AG04449 (cell line): ENCODE measurements at regions of chrX and their contacts with region 1.

Region 1: DNA sequence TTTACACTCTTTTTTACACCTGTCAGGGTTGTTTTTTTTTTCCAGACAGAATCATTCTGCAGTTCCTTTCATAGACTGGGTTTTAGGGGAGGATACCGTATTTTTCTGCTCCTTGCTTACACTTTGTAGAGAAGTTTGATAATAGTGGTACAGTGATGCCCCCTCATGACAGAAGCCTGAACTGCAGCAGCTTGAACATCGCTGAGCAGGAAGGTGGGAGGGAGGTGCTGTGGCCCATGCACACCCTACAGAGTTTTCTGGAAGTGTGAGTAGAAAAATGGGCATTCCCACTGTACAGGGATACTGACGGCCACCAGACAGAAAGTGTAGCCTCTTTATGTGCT is 54.5 kb downstream of the RAB40A start:
- DNase-seq: no peak
- H3K4me3 ChIP-seq: no peak overlapping the region
- CTCF ChIP-seq: peak; percentile 75

Region 2: GRCh38 chrX:102515975-102516941 is 948.5 kb before region 1 on chrX and contains the start of gene TMSB15A:
- CTCF ChIA-PET with region 1: no interaction called
- POLR2A ChIA-PET with region 1: no interaction called
- DNase-seq: no peak
- H3K4me3 ChIP-seq: peak within 1 kb of the TSS; percentile 63
- CTCF ChIP-seq: no peak

Region 3: DNA sequence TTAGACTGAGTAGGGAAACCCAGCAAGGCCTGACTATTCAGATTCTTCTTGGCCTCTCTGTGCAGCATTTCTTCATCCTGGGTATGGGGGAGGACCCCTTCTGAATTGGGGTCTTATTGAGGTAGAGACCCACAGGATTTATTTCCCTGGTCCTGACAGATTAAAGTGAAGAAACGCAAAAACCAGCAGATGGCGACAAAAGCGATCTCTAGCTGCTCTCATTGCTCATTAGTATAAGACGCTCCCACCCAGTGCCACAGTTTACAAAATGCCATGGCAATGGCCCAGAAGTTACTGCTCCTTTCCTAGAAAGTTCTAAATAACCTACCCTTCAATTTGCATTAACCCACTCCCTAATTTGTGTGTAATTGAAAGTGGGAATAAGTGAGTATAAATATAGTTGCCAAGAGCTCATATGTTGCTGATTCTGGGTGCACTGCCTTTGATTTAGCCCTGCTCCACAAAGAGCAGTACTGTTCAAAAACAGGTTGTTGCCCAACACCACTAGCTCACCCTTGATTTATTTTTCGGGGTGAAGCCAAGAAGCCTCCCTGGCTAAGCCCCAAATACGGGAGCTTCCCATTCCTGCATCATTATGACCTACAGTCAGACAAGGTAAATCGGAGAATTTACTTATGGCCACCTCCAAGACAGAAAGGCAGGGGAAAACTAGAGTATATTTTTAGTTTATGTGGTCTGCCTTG is 253.6 kb before region 1 on chrX:
- CTCF ChIA-PET with region 1: interaction called, 48 read pairs
- POLR2A ChIA-PET with region 1: no interaction called
- DNase-seq: no peak
- H3K4me3 ChIP-seq: no peak overlapping the region
- CTCF ChIP-seq: peak; percentile 16

Region 4: GRCh38 chrX:103343105-103343504 is 121.6 kb before region 1 on chrX:
- CTCF ChIA-PET with region 1: interaction called, 45 read pairs
- POLR2A ChIA-PET with region 1: interaction called, 3 read pairs
- DNase-seq: no peak
- H3K4me3 ChIP-seq: no peak overlapping the region
- CTCF ChIP-seq: peak; percentile 50

Region 5: GRCh38 chrX:103356130-103356798 is 108.5 kb before region 1 on chrX and contains the start of gene TCEAL9:
- CTCF ChIA-PET with region 1: interaction called, 12 read pairs
- POLR2A ChIA-PET with region 1: no interaction called
- DNase-seq: no peak
- H3K4me3 ChIP-seq: peak within 1 kb of the TSS; percentile 79
- CTCF ChIP-seq: no peak